Lower leg skin (tissue), 4 donors: ENCODE measurements at regions of chr6 and their contacts with region 1.

Region 1: GRCh38 chr6:6024220-6024619 is 17.5 kb upstream of the NRN1 start:
- DNase-seq: no peak
- H3K4me3 ChIP-seq: no peak overlapping the region
- CTCF ChIP-seq: no peak
- POLR2A ChIP-seq: no peak

Region 2: GRCh38 chr6:7515363-7515762 is 1491.1 kb after region 1 on chr6:
- intact Hi-C with region 1: loop called (anchors 5 kb)
- DNase-seq: no peak
- H3K4me3 ChIP-seq: no peak overlapping the region
- CTCF ChIP-seq: no peak
- POLR2A ChIP-seq: no peak